Cardiac septum (tissue), 1 donor: ENCODE measurements at regions of chr2 and their contacts with region 1.

Region 1: GRCh38 chr2:240586198-240586918 is at the start of gene CAPN10:
- DNase-seq: peak; percentile 99
- total RNA-seq, gene CAPN10: 24.3 TPM

Region 2: DNA sequence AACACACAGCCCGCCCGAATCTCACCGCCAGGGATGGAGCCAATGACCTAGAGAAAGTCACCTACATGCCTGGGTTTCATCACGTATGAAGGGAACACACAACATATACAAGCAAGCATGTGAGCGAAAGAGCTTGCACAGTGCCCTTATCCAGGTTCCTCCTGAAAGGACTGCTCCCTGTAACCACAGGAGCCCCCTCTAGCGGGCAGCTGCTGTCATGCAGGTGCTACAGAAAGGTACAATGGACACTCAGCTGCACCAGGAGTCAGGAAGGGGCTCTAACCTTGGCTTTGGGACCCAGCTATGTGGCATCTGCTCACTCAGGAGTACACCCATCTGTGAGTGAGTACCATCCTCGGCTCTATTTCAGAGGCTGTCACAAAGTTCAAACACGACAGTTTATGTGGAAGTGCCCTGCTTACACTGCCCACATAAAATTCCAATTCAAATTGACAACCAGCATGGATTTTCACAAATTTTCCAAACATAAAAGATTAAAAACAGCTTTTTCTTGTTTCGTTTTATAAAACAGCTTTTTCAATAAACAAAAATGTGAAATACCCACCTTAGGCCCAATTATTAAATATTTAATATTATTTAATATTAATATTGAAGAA is 564.8 kb before region 1 on chr2:
- intact Hi-C with region 1: loop called (anchors 10 kb)
- DNase-seq: no peak

Region 3: DNA sequence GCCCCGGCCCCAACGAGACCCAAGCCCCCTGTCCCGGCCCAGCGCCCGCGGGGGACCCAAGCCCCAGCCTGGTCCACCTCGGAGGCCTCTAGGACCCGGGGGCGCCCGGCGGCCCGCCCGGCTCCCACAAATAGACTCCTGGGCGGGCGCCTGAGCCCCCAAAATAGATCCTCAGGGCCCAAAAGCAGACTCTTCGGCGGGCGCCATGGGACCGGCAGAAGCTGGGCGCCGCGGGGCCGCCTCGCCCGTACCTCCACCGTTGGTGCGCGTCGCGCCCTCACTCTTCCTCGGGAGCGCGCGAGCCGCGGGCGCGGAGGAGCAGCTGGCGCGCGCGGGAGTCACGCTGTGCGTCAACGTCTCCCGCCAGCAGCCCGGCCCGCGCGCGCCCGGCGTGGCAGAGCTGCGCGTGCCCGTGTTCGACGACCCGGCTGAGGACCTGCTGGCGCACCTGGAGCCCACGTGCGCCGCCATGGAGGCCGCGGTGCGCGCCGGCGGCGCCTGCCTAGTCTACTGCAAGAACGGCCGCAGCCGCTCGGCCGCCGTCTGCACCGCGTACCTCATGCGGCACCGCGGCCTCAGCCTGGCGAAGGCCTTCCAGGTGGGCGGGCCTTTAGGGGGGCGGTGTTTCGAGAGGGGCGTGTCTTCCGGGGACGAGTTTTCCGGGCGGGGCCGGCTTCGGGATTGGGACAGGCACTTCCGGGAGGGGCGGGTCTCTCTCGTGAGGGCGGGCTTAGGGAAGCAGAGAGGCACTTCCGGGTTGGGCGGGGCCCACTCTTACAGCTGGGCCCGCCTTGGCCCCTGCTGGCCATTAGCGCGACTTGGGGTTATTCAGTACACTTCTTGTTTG is 25.7 kb before region 1 on chr2:
- intact Hi-C with region 1: loop called (anchors 1 kb)
- DNase-seq: peak; percentile 100

Region 4: DNA sequence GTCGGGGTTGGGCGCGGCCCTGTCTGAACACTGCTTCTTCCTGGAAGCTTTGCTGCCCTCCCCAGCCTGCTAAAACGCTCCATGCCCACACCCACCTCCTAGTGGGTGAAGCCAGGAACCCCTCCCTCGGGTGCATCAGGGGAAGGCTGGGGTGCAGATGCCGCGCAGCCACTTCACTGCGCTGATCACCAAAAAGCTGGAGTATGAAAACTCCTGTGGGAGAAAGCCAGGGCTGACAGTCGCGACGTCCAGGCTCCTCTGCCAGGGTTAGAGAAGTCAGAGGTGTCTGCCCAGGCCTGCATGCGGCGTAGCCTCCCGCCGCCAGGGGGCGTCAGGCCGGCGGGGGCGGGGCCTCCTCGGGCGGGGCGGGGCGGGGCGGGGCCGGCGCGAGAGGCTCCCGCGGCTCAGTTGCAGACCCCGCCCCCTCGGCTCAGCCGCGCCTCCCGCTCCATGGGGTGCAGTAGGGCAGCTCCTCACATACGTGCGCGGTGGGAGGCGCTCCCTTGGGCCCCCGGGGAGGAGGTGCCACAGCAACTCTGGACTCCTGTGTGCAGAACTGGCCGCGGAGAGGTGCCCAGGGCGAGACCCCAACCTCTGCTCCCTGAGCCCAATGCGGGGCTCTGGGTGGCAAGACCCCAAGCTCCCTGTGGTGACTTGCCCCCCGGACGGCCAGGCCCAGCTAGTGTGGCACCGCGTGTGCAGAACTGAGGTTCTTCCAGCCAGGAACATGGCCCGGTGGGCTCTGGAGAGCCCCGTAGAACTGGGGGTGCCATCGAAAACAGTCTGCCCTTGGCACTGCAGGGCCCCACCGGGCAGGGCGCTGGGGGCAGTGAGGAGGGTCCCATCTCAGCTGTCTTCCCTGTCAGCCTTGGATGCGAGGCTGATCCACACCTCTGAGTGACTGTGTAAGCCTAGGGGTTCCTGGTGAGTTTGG is 19.9 kb before region 1 on chr2:
- intact Hi-C with region 1: loop called (anchors 1 kb)
- DNase-seq: peak; percentile 96

Region 5: DNA sequence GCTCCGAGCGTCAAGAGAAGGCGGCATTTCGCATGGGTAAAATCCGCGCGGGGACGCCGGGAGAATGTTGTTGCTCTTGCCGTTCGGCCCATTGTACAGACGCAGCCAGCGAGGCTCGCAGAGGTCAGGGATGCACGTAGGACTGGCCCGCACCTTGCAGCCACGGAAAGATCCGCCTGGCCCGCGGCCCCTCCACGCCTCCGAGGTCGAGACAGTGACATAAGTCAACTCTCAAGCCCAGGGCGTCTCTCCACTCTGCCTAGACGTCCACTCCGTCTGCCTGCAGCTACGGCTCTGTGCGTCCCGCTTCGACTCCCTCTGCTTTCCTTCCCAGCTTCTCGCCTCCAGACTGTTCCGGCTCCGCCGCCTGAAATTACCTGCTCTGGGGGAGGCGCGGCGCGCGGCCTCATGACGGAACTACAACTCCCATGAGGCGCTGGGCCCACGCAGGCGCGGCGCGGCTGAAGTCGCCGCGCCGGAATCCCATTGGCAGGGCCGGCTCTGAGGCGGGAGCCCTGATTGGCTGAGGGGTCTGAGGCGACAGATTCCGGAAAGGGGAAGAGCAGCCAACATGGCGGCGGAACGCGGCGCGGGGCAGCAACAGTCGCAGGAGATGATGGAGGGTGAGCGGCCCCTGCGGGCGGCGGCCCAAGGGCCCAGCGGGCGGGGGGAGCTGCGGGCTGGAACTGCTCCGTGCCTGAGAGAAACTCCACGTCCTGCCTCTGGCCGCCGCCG is 563.7 kb after region 1 on chr2 and contains the start of gene PPP1R7:
- intact Hi-C with region 1: loop called (anchors 5 kb)
- DNase-seq: peak; percentile 97
- total RNA-seq, gene PPP1R7: 77.7 TPM